ENCODE measurements at regions of chr3 and their contacts with region 1.

Region 1: DNA sequence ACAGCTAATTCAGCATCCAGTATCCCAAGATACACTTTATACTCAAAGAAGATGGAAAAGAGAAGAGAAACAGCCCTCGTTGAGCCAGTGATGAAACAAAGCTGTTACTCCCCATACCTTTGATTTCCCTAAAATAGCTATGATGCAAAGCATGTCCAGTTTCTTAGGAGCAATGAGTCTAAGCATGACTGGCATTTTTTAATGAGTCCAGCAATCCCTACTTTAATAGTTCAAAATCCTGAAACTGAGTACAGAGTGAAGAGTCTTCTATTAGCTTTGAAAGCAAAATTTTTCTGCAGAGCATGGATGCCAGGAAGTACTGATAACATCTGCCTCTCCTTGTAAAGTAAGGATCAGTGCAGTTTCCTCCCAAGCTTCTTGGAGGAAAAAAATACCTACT is 302.7 kb downstream of the IL5RA start:
- DNase-seq: no peak
- H3K4me3 ChIP-seq: no peak overlapping the region
- H3K27ac ChIP-seq: no peak overlapping the region
- H3K4me1 ChIP-seq: no peaks in the 10 kb centered on the region
- H3K27me3 ChIP-seq: no peaks in the 10 kb centered on the region
- CTCF ChIP-seq: no peak
- POLR2A ChIP-seq: no peak

Region 2: DNA sequence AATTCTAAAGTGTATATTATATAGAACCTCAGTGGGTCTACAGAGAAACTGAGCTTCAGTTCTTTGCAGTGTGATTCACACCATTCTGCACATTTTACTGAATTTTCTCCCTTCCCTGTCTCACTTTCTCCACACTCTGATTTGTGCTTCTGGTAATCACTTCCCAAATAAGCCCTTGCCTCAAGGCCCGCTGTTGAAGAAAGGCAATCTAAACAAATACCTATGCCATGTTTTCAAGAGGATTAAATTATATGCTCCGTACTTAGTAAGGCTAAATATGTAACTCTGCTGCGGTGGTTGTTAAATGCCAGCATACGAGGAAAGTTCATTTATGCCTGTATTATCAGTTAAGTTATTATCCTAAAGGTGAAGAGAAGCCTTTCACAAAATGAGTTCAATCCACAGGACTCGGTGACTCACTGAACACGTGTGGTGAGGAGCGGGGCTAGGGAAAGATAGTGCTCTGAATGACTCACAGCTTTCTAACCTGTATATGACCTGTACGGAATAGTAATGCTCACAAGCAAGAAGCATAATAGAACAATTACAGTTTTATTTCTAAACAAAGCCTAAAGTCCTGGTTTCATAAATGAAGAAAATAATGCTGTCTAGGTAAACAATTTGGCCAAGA is 1689.6 kb before region 1 on chr3:
- intact Hi-C with region 1: loop called (anchors 5 kb)
- DNase-seq: no peak
- H3K4me3 ChIP-seq: no peak overlapping the region
- H3K27ac ChIP-seq: no peak overlapping the region
- H3K4me1 ChIP-seq: no peaks in the 10 kb centered on the region
- H3K27me3 ChIP-seq: no peaks in the 10 kb centered on the region
- CTCF ChIP-seq: no peak
- POLR2A ChIP-seq: no peak

Region 3: DNA sequence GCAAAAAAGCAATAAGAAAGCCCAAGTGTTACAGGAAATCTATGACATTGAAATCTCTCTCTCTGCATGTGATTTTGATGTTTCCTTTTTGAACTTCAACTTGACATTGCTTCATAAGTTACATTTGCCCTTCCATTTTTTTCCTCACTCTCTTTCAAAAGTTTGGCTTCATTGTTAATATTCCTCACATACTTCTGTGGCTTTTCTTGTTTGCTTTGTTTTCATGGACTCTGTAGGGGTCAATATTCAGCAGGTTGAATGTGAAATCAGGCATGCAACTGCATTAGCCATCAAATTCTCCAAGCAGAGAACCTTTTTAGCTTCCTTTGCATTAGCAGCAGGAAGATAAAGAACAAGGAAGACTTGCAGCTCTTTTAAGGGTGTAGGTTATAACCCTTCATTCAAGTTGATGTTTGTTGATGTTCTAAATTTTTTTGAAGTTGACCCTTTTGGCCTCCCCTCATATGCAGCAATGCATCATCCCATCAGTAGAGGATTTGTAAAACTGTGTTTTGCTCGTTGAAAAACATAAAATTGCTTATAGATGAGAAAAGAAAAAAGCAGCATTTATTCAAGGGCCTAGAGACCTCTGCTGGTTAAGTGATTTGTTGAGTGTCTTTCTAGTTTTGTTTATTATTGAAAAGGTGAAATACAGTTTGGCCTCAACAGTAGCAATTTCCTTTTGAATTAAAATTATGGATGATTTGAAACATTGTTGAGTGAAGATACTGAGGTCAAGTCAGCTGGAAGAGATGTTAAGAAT is 91.3 kb after region 1 on chr3:
- intact Hi-C with region 1: no loop called
- DNase-seq: no peak
- H3K4me3 ChIP-seq: no peak overlapping the region
- H3K27ac ChIP-seq: no peak overlapping the region
- H3K4me1 ChIP-seq: no peaks in the 10 kb centered on the region
- H3K27me3 ChIP-seq: no peaks in the 10 kb centered on the region
- CTCF ChIP-seq: no peak
- POLR2A ChIP-seq: no peak

Measured in vagina (tissue), 2 donors.